ENCODE measurements at regions of chr14 and their contacts with region 1.

Region 1: GRCh38 chr14:55051426-55052268 is at the start of gene MAPK1IP1L:
- DNase-seq: peak; percentile 86 to 99 (median 92)
- ATAC-seq: peak; percentile 97
- H3K4me3 ChIP-seq: peak within 1 kb of the TSS; percentile 93
- H3K4me3 Mint-ChIP-seq: peak within 1 kb of the TSS; percentile 88 to 94 (median 92)
- H3K27ac ChIP-seq: peak within 1 kb of the TSS; percentile 100
- H3K27ac Mint-ChIP-seq: peak within 1 kb of the TSS; percentile 87 to 97 (median 96)
- H3K4me1 ChIP-seq: peaks cover 26 to 32% of the 10 kb centered on the region in 2 donors
- H3K4me1 Mint-ChIP-seq: peaks cover 17 to 54% (median 39%) of the 10 kb centered on the region in 7 donors
- H3K27me3 ChIP-seq: no peaks in the 10 kb centered on the region
- H3K27me3 Mint-ChIP-seq: no peaks in the 10 kb centered on the region
- total RNA-seq, gene MAPK1IP1L: 65.1 to 143 (median 111) TPM

Region 2: GRCh38 chr14:54509546-54510501 is 541.8 kb before region 1 on chr14 and contains the start of gene CGRRF1:
- CTCF ChIA-PET with region 1: no interaction called
- POLR2A ChIA-PET with region 1: no interaction called
- intact Hi-C with region 1: loop called in 1 of 2 experiments (anchors 5 kb)
- DNase-seq: peak; percentile 86 to 98 (median 89)
- ATAC-seq: peak; percentile 99
- H3K4me3 ChIP-seq: peak within 1 kb of the TSS; percentile 93
- H3K4me3 Mint-ChIP-seq: peak within 1 kb of the TSS; percentile 87 to 99 (median 96)
- H3K27ac ChIP-seq: peak within 1 kb of the TSS; percentile 72
- H3K27ac Mint-ChIP-seq: peak within 1 kb of the TSS; percentile 85 to 93 (median 89)
- H3K4me1 ChIP-seq: peaks cover 11% of the 10 kb centered on the region in 2 donors
- H3K4me1 Mint-ChIP-seq: peaks cover 20 to 56% (median 53%) of the 10 kb centered on the region in 7 donors
- H3K27me3 ChIP-seq: no peaks in the 10 kb centered on the region
- H3K27me3 Mint-ChIP-seq: peaks cover 0 to 10% (median 0%) of the 10 kb centered on the region in 5 donors
- total RNA-seq, gene CGRRF1: 11.2 to 24.1 (median 17.3) TPM

Region 3: DNA sequence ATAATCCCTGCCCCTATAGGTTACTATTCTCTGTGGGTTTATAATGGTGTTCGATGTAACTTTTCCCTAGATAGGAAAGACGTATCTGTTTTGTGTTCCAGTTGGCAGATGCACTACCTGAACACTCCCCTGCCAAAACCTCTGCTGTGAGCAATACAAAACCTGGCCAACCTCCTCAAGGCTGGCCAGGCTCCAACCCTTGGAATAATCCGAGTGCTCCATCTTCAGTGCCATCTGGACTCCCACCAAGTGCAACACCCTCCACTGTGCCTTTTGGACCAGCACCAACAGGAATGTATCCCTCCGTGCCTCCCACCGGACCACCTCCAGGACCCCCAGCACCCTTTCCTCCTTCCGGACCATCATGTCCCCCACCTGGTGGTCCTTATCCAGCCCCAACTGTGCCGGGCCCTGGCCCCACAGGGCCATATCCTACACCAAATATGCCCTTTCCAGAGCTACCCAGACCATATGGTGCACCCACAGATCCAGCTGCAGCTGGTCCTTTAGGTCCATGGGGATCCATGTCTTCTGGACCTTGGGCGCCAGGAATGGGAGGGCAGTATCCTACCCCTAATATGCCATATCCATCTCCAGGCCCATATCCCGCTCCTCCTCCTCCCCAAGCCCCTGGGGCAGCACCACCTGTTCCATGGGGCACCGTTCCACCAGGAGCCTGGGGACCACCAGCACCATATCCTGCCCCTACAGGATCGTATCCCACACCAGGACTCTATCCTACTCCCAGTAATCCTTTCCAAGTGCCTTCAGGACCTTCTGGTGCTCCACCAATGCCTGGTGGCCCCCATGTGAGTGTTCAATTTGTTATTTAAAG is 11.1 kb after region 1 on chr14:
- CTCF ChIA-PET with region 1: interaction called, 7 read pairs
- POLR2A ChIA-PET with region 1: interaction called, 5 read pairs
- intact Hi-C with region 1: loop called in 1 of 2 experiments (anchors 1 kb)
- DNase-seq: no peak
- ATAC-seq: peak; percentile 16
- H3K4me3 ChIP-seq: no peak overlapping the region
- H3K4me3 Mint-ChIP-seq: peak overlapping the region in 3 of 10 donors; percentile 9 to 49 (median 25)
- H3K27ac ChIP-seq: no peak overlapping the region
- H3K27ac Mint-ChIP-seq: peak overlapping the region in 5 of 9 donors; percentile 27 to 59 (median 50)
- H3K4me1 ChIP-seq: peaks cover 0 to 8% of the 10 kb centered on the region in 2 donors
- H3K4me1 Mint-ChIP-seq: peaks cover 19 to 42% (median 38%) of the 10 kb centered on the region in 7 donors
- H3K27me3 ChIP-seq: no peaks in the 10 kb centered on the region
- H3K27me3 Mint-ChIP-seq: no peaks in the 10 kb centered on the region

Region 4: GRCh38 chr14:55160989-55161388 is 109.3 kb after region 1 on chr14:
- CTCF ChIA-PET with region 1: interaction called, 11 read pairs
- POLR2A ChIA-PET with region 1: no interaction called
- intact Hi-C with region 1: loop called in 1 of 2 experiments (anchors 1 kb)
- DNase-seq: peak in 5 of 9 donors; percentile 6 to 37 (median 16)
- ATAC-seq: peak; percentile 68
- H3K4me3 ChIP-seq: no peak overlapping the region
- H3K4me3 Mint-ChIP-seq: no peak overlapping the region
- H3K27ac ChIP-seq: no peak overlapping the region
- H3K27ac Mint-ChIP-seq: peak overlapping the region in 1 of 9 donors; percentile 60
- H3K4me1 ChIP-seq: no peaks in the 10 kb centered on the region
- H3K4me1 Mint-ChIP-seq: peaks cover 0 to 20% (median 9%) of the 10 kb centered on the region in 7 donors
- H3K27me3 ChIP-seq: no peaks in the 10 kb centered on the region
- H3K27me3 Mint-ChIP-seq: peaks cover 0 to 4% (median 0%) of the 10 kb centered on the region in 5 donors

Region 5: DNA sequence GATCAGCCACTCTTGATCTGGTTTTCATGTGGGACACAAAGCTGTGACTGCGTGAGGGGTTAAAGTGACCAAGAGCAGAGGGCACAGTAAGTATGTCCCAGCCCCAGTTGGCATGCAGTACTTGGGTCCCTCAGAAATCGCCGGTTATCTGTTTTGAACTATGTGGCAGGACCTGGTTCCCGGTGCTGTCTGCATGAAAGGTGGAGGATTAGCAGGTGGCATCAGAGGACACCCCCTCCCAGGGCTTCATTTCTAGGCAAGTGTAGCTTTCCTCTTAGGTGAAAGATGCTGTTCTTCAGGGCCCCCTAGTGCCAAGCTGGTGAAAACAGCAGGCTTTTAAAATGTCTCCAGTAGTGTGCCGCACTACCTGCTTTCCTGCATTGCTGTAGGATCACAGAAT is 302.9 kb after region 1 on chr14:
- CTCF ChIA-PET with region 1: interaction called, 3 read pairs
- POLR2A ChIA-PET with region 1: interaction called, 4 read pairs
- intact Hi-C with region 1: loop called in 1 of 2 experiments (anchors 10 kb)
- DNase-seq: peak; percentile 25 to 79 (median 73)
- ATAC-seq: peak; percentile 95
- H3K4me3 ChIP-seq: peak overlapping the region; percentile 12
- H3K4me3 Mint-ChIP-seq: peak overlapping the region in 9 of 10 donors; percentile 48 to 85 (median 72)
- H3K27ac ChIP-seq: peak overlapping the region; percentile 66
- H3K27ac Mint-ChIP-seq: peak overlapping the region; percentile 72 to 96 (median 95)
- H3K4me1 ChIP-seq: peaks cover 0 to 9% of the 10 kb centered on the region in 2 donors
- H3K4me1 Mint-ChIP-seq: peaks cover 6 to 29% (median 21%) of the 10 kb centered on the region in 7 donors
- H3K27me3 ChIP-seq: no peaks in the 10 kb centered on the region
- H3K27me3 Mint-ChIP-seq: no peaks in the 10 kb centered on the region

Region 6: GRCh38 chr14:55832122-55832911 is 780.7 kb after region 1 on chr14:
- CTCF ChIA-PET with region 1: no interaction called
- POLR2A ChIA-PET with region 1: no interaction called
- intact Hi-C with region 1: no loop called
- DNase-seq: no peak
- ATAC-seq: no peak
- H3K4me3 ChIP-seq: no peak overlapping the region
- H3K4me3 Mint-ChIP-seq: no peak overlapping the region
- H3K27ac ChIP-seq: no peak overlapping the region
- H3K27ac Mint-ChIP-seq: no peak overlapping the region
- H3K4me1 ChIP-seq: no peaks in the 10 kb centered on the region
- H3K4me1 Mint-ChIP-seq: peaks cover 0 to 3% (median 0%) of the 10 kb centered on the region in 7 donors
- H3K27me3 ChIP-seq: no peaks in the 10 kb centered on the region
- H3K27me3 Mint-ChIP-seq: peaks cover 0 to 18% (median 0%) of the 10 kb centered on the region in 5 donors

Region 7: DNA sequence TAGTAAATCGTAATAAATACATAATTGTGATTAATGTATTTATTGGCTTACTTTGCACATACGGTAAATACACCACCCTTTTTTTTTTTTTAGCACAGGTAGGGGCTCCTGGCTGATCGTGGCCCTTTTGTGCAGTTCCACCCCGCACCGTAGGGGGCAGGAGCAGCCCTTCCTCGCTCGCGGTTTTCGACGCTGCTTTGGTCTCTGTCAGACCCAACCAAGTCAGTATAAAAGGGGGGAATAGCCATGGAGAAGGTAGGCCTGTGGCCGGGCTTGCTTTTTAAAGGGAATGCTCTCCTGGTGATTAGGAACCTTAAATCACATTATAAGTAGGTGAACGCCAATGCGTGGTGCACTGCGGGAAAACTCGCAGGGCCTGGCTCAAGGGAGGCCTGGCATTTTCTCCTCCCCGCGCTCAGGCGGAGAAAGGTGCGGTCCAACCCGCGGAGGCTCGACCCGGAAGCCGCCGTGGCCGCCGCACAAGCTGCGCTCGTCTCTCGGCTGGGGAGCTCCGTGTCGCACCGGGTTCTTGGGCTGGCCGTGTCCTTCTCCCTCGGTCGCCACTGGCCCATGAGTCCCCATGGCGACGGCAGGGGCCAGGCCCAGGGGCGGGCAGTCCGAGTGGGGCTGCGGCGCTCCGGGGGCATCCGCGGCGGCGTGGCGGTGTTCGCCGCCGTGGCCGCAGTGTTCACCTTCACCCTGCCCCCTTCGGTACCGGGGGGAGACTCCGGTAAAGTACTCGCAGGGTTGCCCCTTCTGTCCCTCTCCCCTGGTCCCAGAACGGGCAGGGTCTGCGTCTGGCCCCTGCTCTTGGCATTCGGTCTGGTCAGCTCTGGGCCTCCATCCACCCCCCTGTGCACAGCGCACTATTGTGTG is 1527.9 kb after region 1 on chr14 and contains the start of gene TMEM260:
- CTCF ChIA-PET with region 1: no interaction called
- POLR2A ChIA-PET with region 1: no interaction called
- intact Hi-C with region 1: loop called in 1 of 2 experiments (anchors 5 kb)
- DNase-seq: peak; percentile 83 to 95 (median 92)
- ATAC-seq: peak; percentile 98
- H3K4me3 ChIP-seq: peak within 1 kb of the TSS; percentile 83
- H3K4me3 Mint-ChIP-seq: peak within 1 kb of the TSS; percentile 87 to 97 (median 95)
- H3K27ac ChIP-seq: peak within 1 kb of the TSS; percentile 88
- H3K27ac Mint-ChIP-seq: peak within 1 kb of the TSS; percentile 90 to 98 (median 96)
- H3K4me1 ChIP-seq: peaks cover 19 to 22% of the 10 kb centered on the region in 2 donors
- H3K4me1 Mint-ChIP-seq: peaks cover 33 to 45% (median 42%) of the 10 kb centered on the region in 7 donors
- H3K27me3 ChIP-seq: no peaks in the 10 kb centered on the region
- H3K27me3 Mint-ChIP-seq: no peaks in the 10 kb centered on the region
- total RNA-seq, gene TMEM260: 20.8 to 39.0 (median 27.4) TPM